AG04449 (cell line): ENCODE measurements at regions of chr2 and their contacts with region 1.

Region 1: DNA sequence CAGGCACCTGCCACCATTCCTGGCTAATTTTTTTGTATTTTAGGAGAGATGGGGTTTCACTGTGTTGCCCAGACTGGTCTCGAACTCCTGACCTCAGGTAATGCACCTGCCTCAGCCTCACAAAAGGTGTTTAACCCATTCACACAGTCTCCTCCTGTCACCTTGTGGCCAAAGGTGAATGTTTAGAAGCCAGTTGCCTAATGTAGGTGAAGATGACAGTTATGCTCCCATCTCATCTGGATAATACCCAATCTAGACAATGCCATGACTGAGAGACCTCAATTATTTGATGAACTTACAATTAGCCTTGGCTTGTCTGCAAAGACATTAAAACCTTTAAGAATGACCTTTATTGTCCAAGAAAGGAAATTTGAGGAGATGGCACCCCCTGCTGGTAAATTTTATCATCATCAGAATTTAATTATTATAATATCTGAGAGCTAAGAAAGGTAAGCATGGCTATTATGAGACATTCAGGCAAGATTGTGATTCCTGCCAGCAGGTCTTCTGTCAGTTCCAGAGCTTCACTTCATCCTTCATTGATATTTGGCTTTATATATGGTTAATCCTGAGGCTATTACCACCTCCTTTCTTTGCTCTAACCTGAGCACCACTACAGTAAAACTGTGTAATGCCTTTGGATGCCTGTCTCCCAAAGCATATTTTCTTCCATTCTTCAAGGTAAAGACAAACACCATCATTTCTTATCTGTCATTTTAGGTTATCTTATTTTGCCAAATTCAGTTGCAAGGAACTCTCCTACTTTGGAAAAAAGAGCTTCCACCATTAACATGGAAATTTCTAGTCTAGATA is 117.6 kb downstream of the FAM124B start:
- DNase-seq: no peak
- H3K4me3 ChIP-seq: no peak overlapping the region
- CTCF ChIP-seq: peak; percentile 45

Region 2: GRCh38 chr2:223970343-223971128 is 313.8 kb before region 1 on chr2:
- CTCF ChIA-PET with region 1: interaction called, 365 read pairs
- POLR2A ChIA-PET with region 1: interaction called, 5 read pairs
- DNase-seq: no peak
- H3K4me3 ChIP-seq: no peak overlapping the region
- CTCF ChIP-seq: peak; percentile 65

Region 3: DNA sequence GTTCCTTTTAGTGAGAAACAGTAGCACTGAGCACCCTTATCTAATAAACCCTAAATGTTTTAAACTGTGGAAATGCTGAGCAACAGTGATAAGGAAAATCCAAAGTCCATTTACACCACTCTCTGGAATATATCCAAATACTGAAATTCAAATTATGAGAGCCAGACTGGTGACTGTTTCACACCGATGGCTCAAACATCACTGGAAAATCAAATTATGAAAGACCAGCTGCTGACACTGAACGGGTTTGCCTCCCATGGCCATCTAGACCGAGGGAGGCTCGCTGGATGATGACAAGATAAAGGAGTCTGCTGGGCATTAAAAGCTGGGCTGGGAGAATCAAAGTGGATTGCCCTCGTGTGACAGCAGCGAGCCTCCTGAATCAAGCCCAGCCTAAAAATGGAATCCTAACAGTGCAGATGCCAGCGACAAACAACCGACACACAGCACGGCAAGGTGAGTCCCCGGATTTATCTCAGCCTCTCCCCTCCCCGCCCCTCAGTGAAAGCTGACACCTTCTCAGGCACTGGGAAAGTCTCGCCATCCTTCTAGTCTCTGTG is 275.6 kb before region 1 on chr2:
- CTCF ChIA-PET with region 1: interaction called, 19 read pairs
- POLR2A ChIA-PET with region 1: no interaction called
- DNase-seq: no peak
- H3K4me3 ChIP-seq: no peak overlapping the region
- CTCF ChIP-seq: no peak

Region 4: DNA sequence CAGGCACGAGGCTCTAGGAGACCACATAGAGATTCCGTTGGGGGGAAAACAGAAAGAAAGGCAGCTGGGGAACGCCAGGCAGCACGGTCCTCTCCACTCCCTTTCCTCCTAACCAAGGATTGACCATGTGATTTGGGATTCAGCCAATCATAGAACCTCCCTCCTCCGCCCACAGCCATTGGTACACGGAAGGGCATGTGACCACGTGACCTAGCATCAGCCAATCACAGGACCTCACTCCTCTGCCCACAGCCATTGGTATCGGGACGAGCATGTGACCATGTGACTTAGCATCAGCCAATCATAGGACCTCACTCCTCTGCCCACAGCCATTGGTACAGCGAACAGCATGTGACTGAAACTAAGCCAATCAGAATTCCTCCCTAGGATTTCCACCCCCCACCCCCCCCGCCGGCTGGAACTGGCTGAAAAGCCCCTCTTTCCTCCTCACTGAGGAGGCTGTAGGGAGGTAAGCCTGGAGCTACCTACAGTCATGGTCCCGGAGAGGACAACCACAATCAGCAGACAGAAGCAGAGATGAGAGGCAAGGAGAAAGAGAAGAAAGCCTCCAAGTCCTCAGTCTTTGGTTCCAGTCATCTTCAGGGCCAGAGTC is 252.9 kb before region 1 on chr2:
- CTCF ChIA-PET with region 1: interaction called, 68 read pairs
- POLR2A ChIA-PET with region 1: no interaction called
- DNase-seq: no peak
- H3K4me3 ChIP-seq: no peak overlapping the region
- CTCF ChIP-seq: no peak

Region 5: DNA sequence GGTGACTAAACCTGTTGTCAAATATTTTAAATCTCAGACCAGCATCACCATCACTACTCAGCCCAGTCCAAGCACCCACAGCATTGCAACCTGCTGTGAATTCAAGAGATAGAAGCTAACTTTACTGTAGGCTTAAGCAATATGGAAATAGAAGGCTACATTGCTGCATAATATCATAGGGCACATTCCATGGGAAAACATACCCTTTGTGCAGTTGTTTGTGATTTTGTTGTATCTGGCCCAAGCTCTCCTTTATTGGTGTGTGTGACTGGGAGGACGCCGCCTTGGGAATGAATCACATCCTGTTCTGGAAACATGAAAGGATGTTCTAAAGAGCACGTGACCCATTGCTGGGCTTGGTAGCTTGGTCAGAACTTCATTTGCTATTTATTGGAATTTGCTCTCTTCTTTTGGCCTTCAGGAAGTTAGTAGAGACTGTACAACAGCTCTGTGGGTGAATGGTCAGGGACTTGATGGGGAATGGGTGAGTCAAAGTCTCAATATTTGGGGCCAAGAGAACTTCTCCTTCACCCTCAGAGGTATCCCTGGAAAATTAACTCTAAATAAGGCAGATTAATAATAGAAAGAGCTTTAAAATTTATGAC is 138.5 kb before region 1 on chr2:
- CTCF ChIA-PET with region 1: interaction called, 12 read pairs
- POLR2A ChIA-PET with region 1: no interaction called
- DNase-seq: peak; percentile 47
- H3K4me3 ChIP-seq: no peak overlapping the region
- CTCF ChIP-seq: no peak